ENCODE measurements at regions of chr1 and their contacts with region 1.

Region 1: DNA sequence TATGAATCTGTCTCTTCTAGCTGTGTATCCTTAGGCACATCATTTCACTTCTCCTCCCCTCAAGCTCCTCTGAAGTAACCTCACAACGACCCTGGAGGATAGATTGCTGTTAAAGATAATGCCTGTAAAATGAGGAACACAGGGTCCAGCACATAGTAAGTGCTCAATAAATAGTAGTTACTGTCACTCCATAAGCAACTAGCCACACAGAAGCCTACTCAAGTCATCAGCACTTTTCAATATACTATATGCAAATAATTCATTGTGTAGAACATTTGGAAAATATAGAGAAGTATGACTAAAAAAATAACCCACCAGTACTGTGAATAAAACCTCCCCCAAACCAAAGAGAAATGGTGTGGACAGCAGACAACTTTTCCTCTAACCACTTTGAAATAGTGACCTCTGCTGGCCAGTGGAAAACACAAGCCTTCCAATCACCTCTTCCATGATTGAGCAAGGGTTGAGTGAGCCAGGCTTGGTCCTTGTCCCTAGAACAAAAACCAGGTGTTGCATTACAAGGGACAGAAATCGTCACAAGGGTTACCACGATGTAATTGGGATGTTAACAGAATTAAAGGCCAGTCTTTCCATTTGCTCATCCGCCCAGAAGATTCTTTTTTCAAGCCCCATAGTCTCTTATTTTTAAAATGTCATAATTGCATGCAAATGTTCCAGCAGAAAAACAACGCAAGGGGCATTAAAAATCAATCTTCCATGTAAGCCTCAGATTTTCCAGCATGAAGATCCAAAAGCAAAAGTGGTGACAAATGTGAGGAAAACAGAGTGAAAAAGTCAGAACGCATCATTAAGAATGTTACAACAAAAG is 15.7 kb upstream of the GLIS1 start:
- DNase-seq: peak in 2 of 10 donors; percentile 32 to 48
- H3K4me3 ChIP-seq: no peak overlapping the region
- H3K27ac ChIP-seq: no peak overlapping the region
- H3K27me3 ChIP-seq: no peaks in the 10 kb centered on the region
- CTCF ChIP-seq: peak; percentile 40 to 84 (median 69)

Region 2: DNA sequence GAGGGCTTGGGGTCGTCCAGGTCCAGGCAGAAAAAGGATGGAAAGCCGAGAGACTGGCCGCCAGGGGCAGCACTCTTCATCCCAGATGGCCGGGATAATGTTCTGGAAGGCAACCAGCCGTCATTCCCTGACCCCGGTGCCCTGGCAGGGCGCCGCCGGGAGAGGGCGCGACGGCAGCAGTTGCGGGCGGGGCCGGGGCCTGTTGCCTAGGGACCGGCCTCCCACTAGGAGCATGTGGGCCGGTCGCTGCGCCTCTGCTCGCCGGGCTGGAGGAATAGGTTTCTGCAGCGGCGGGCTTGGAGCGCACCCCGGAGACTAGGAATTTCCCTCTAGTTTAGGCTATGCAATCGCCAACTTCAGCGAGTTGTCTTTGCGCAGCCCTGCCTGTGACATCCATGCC is 284.5 kb before region 1 on chr1:
- intact Hi-C with region 1: no loop called
- DNase-seq: peak in 7 of 10 donors; percentile 34 to 67 (median 48)
- H3K4me3 ChIP-seq: peak overlapping the region in 39 of 59 donors; percentile 4 to 52 (median 31)
- H3K27ac ChIP-seq: no peak overlapping the region
- H3K27me3 ChIP-seq: no peaks in the 10 kb centered on the region
- CTCF ChIP-seq: peak; percentile 33 to 74 (median 62)

Region 3: DNA sequence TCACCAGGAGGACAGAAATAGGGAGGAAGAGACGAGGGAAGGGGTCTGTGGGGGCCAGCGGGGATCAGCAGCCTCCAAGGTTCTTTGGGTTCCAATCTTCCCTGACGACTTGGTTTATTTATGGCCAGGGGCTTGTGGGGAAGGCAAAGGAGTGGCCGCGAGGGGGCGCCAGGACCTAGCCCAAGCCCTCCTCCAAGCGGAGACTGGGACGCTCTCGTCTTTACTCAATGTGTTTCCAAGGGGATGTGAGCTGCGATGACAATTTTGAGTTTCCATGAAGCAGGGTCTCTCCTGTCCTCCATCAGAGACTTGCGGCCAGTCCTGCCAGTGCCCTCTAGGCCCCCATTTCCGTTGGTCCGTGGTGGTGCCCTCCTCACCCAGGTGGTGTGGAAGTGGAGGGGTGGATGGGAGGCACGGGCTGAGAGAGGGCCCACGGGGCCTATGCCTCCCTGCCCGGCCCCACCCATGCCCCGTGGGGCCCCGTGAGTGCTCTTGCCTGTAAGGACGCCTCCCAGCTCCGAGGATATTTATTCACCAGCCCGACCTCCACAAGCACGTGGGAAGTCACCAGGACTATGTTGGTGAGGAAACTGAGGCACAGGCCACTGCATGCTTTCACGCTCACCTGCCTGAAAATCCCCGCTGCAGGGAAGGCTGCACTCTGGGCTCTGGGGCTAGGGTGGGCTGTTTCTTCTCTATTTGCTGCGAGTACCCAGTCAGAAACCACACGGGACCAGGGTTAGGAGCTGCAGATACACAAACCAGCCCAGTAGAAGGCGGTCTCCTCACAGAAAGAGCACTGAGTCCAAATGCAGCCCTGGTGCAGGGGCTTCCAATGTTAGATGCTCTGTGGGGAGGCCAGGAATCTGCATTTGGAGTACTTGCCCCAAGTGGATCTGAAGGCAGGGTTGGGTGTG is 269.0 kb before region 1 on chr1:
- intact Hi-C with region 1: loop called (anchors 1 to 2 kb)
- DNase-seq: peak; percentile 73 to 84 (median 78)
- H3K4me3 ChIP-seq: peak overlapping the region in 4 of 59 donors; percentile 5 to 24 (median 12)
- H3K27ac ChIP-seq: no peak overlapping the region
- H3K27me3 ChIP-seq: peaks cover 0 to 16% (median 0%) of the 10 kb centered on the region in 45 donors
- CTCF ChIP-seq: peak; percentile 69 to 94 (median 86)